Endothelial cell of umbilical vein (primary cell): ENCODE measurements at regions of chr7 and their contacts with region 1.

Region 1: DNA sequence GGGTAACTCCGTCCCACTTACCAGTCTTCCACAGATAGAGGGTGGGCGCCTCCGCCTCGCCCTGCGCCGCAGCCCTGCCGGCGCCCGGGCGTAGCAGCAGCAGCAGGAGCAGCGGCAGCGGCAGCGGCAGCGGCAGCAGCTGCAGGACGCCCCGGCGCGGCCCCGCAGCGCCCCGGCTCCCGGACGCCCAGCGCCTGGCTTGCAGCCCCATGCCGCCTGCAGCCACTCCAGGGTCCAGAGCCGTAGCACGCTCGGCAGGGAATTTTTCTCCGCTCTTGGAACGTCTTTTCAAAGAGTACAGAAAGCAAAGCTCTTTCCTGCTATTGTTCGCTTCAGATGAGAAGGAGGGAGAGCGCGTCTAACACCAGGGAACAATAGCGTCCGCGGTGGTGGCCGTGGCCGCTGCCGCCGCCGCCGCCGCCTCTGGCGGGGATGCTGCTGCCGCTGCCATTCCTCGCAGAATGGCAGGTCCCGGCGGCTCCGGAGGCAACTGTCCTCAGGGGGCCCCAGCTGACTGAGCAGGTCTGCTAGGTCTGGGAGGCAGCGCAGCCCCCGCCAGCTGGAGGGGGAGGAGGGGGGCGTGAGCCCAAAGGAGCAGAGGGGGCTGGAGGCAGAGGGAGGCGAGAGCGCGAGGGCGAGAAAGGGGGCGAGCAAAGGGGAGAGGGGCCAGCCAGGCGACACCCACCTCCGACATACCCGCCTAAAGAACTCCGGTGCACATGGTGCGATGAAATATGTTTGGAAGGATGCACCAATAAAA is at the start of gene THSD7A:
- DNase-seq: peak; percentile 81
- H3K4me3 ChIP-seq: peak within 1 kb of the TSS; percentile 55 to 89 (median 66)
- H3K27ac ChIP-seq: peak within 1 kb of the TSS; percentile 84
- H3K4me1 ChIP-seq: peaks cover 12% of the 10 kb centered on the region
- H3K27me3 ChIP-seq: no peaks in the 10 kb centered on the region
- CTCF ChIP-seq: peak in 1 of 2 donors; percentile 7
- POLR2A ChIP-seq: no peak
- total RNA-seq, gene THSD7A: 12.7 and 15.2 TPM in 2 replicates

Region 2: DNA sequence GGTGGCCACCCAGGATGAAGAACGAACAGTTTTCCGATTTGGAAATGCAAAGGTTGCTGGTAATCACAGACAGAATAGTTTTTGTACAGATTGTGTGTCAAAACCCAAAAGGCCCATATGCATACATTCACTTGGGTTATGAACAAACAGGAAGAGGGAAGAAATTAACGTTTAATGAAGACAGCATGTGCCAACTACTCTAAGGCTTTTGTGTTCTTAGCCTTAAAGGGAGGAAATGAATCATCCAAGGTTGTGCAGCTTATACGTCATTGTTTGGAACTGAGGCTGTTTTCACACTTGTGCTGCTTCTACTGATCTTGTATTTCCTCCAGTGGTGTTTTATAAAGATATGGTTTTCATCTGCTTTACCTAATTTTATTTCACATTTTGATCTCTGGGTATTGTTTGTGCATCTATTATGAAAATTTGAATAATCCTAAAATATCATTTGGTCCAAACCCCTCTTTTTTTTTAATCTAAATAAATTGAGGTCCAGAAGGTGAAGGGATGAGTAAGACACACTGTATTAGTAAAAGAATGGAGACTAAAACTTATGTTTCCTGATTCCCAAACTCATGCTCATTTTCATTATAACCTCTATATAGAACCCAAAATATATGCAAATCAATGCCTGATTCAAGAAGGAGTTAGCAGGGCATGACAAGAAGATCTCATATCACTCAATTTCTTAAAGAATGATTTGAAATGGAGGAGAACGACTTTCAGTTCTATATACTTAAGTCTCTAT is 373.0 kb before region 1 on chr7:
- CTCF ChIA-PET with region 1: no interaction called
- POLR2A ChIA-PET with region 1: no interaction called
- dilution Hi-C with region 1: no loop called
- intact Hi-C with region 1: loop called (anchors 10 kb)
- DNase-seq: peak; percentile 96
- H3K4me3 ChIP-seq: peak overlapping the region in 1 of 3 experiments; percentile 10
- H3K27ac ChIP-seq: peak overlapping the region; percentile 93
- H3K4me1 ChIP-seq: peaks cover 23% of the 10 kb centered on the region
- H3K27me3 ChIP-seq: no peaks in the 10 kb centered on the region
- CTCF ChIP-seq: no peak
- POLR2A ChIP-seq: peak; percentile 51

Region 3: GRCh38 chr7:11607686-11608085 is 224.2 kb before region 1 on chr7:
- CTCF ChIA-PET with region 1: interaction called, 8 read pairs
- POLR2A ChIA-PET with region 1: interaction called, 4 read pairs
- dilution Hi-C with region 1: no loop called
- intact Hi-C with region 1: loop called (anchors 5 kb)
- DNase-seq: peak; percentile 89
- H3K4me3 ChIP-seq: no peak overlapping the region
- H3K27ac ChIP-seq: no peak overlapping the region
- H3K4me1 ChIP-seq: peaks cover 14% of the 10 kb centered on the region
- H3K27me3 ChIP-seq: no peaks in the 10 kb centered on the region
- CTCF ChIP-seq: no peak
- POLR2A ChIP-seq: no peak

Region 4: GRCh38 chr7:11716185-11716584 is 115.7 kb before region 1 on chr7:
- CTCF ChIA-PET with region 1: interaction called, 3 read pairs
- POLR2A ChIA-PET with region 1: no interaction called
- dilution Hi-C with region 1: no loop called
- intact Hi-C with region 1: loop called (anchors 1 kb)
- DNase-seq: peak; percentile 98
- H3K4me3 ChIP-seq: no peak overlapping the region
- H3K27ac ChIP-seq: peak overlapping the region; percentile 89
- H3K4me1 ChIP-seq: peaks cover 42% of the 10 kb centered on the region
- H3K27me3 ChIP-seq: no peaks in the 10 kb centered on the region
- CTCF ChIP-seq: no peak
- POLR2A ChIP-seq: no peak

Region 5: GRCh38 chr7:12211054-12211710 is 379.3 kb after region 1 on chr7 and contains the start of gene TMEM106B:
- CTCF ChIA-PET with region 1: no interaction called
- POLR2A ChIA-PET with region 1: no interaction called
- dilution Hi-C with region 1: no loop called
- intact Hi-C with region 1: loop called (anchors 1 kb)
- DNase-seq: peak; percentile 97
- H3K4me3 ChIP-seq: peak within 1 kb of the TSS; percentile 63 to 87 (median 85)
- H3K27ac ChIP-seq: peak within 1 kb of the TSS; percentile 53
- H3K4me1 ChIP-seq: peaks cover 10% of the 10 kb centered on the region
- H3K27me3 ChIP-seq: peaks cover 0 to 17% of the 10 kb centered on the region in 2 experiments
- CTCF ChIP-seq: no peak
- POLR2A ChIP-seq: peak; percentile 88
- total RNA-seq, gene TMEM106B: 23.0 and 23.1 TPM in 2 replicates

Region 6: DNA sequence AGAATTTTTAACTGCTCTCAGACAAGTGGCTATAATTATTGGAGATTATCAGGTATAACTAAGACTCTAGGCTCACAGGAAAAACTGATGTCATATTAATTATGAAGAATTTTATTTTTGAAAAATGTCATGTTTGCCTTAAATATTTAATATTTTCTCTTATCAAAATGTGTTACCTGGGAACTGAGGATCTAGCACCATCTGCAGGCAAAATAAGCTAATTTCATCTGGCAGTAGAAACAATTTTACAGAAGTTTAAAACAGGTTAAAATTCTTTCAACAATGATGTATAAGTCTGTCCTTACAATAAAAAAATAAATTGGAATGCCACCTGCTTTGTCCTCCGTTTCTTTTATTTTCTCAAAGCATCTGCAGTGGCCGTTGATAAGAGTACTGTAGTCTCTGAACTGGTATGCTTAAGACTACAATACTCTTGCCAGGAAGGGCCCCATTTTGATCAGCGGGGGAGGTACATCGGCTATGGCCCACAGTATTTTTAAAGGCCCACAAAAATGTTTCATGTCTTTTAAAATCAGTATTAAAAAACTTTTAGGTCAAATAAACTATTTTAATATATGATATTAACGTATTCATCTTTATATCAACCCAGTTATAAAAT is 490.5 kb after region 1 on chr7:
- CTCF ChIA-PET with region 1: interaction called, 60 read pairs
- POLR2A ChIA-PET with region 1: no interaction called
- dilution Hi-C with region 1: no loop called
- intact Hi-C with region 1: loop called (anchors 1 kb)
- DNase-seq: peak; percentile 51
- H3K4me3 ChIP-seq: no peak overlapping the region
- H3K27ac ChIP-seq: no peak overlapping the region
- H3K4me1 ChIP-seq: no peaks in the 10 kb centered on the region
- H3K27me3 ChIP-seq: no peaks in the 10 kb centered on the region
- CTCF ChIP-seq: peak; percentile 32 to 38
- POLR2A ChIP-seq: no peak

Region 7: DNA sequence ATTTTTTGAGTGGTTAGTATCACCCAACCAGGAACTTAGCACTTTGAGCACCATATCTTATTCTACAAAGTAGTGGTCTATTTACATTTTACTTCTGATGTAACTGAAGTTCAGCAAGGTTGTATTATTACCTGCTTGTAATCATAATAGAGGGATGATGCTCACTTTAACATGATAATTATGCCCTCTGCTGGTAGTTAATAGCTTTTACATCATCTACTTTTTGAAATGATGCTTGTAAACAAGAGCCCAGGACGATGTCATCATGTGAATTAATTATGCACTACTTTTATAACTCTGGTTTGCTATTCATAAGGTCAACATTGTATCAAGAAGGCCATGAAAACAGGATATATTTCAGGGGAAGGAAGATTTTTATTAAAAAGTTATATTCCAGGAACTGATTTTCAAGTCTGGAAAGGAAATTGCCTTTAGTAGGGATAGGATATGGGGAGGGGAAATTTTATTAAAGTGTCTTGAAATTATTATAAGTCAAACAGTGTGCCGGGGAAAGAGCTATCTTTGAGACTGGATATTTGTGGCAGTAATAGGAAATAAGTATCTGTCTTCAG is 658.3 kb after region 1 on chr7:
- CTCF ChIA-PET with region 1: interaction called, 65 read pairs
- POLR2A ChIA-PET with region 1: no interaction called
- dilution Hi-C with region 1: no loop called
- intact Hi-C with region 1: no loop called
- DNase-seq: peak; percentile 48
- H3K4me3 ChIP-seq: no peak overlapping the region
- H3K27ac ChIP-seq: no peak overlapping the region
- H3K4me1 ChIP-seq: no peaks in the 10 kb centered on the region
- H3K27me3 ChIP-seq: no peaks in the 10 kb centered on the region
- CTCF ChIP-seq: peak; percentile 25 to 28
- POLR2A ChIP-seq: no peak